Mammary epithelial cell (primary cell): ENCODE measurements at regions of chr11 and their contacts with region 1.

Region 1: GRCh38 chr11:65810046-65810868 is 23.4 kb downstream of the OVOL1 start:
- DNase-seq: no peak
- H3K4me3 ChIP-seq: no peak overlapping the region
- H3K27ac ChIP-seq: no peak overlapping the region
- H3K4me1 ChIP-seq: no peaks in the 10 kb centered on the region
- H3K27me3 ChIP-seq: peaks cover 2% of the 10 kb centered on the region
- CTCF ChIP-seq: no peak

Region 2: DNA sequence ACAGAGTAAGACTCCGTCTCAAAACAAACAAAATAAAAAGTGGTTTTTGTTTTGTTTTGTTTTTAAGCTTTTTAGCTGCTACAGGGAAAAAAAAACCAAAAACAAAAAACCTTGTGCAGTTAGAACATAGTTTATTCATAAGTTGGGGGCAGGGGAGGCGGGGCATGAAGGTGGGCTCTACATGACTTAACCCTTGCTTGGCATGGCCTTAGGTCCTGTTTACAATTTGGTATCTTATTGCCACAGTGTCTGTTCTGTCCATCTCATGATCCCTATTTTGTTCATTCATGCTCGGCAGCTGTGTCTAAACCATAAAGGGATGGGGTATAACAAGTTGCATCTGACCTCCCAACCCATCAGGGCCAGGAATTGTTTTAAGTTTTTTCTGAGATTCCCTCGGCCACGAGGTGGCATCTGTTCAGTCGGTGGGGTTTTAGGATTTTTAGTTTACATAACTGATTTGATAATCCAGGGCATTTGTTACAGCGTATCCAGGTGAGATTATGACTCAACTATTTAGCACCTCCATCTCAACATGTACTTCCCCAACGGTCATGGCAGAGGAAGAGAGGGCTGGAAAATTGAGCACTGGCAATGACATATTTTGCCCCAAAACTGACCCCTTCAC is 36.4 kb before region 1 on chr11:
- CTCF ChIA-PET with region 1: no interaction called
- dilution Hi-C with region 1: loop called (anchors 5 kb)
- in situ Hi-C with region 1: no loop called
- intact Hi-C with region 1: no loop called
- DNase-seq: peak; percentile 38
- H3K4me3 ChIP-seq: no peak overlapping the region
- H3K27ac ChIP-seq: no peak overlapping the region
- H3K4me1 ChIP-seq: peaks cover 15% of the 10 kb centered on the region
- H3K27me3 ChIP-seq: no peaks in the 10 kb centered on the region
- CTCF ChIP-seq: peak; percentile 19 to 37

Region 3: GRCh38 chr11:65849771-65850216 is 39.5 kb after region 1 on chr11:
- CTCF ChIA-PET with region 1: no interaction called
- dilution Hi-C with region 1: loop called (anchors 5 kb)
- in situ Hi-C with region 1: no loop called
- intact Hi-C with region 1: no loop called
- DNase-seq: no peak
- H3K4me3 ChIP-seq: no peak overlapping the region
- H3K27ac ChIP-seq: no peak overlapping the region
- H3K4me1 ChIP-seq: peaks cover 4% of the 10 kb centered on the region
- H3K27me3 ChIP-seq: no peaks in the 10 kb centered on the region
- CTCF ChIP-seq: no peak